ENCODE measurements at regions of chr15 and their contacts with region 1.

Region 1: GRCh38 chr15:82971218-82971984 is 14.6 kb upstream of the RAMAC start:
- DNase-seq: no peak
- ATAC-seq: no peak
- H3K4me3 Mint-ChIP-seq: no peak overlapping the region
- H3K27ac Mint-ChIP-seq: no peak overlapping the region
- H3K4me1 Mint-ChIP-seq: peaks cover 16% of the 10 kb centered on the region
- H3K27me3 Mint-ChIP-seq: peaks cover 3% of the 10 kb centered on the region

Region 2: GRCh38 chr15:82985688-82986441 is 14.5 kb after region 1 on chr15 and contains the start of gene RAMAC:
- POLR2A ChIA-PET with region 1: interaction called, 10 read pairs
- DNase-seq: peak; percentile 83
- ATAC-seq: peak; percentile 92
- H3K4me3 Mint-ChIP-seq: peak within 1 kb of the TSS; percentile 90
- H3K27ac Mint-ChIP-seq: peak within 1 kb of the TSS; percentile 98
- H3K4me1 Mint-ChIP-seq: peaks cover 27% of the 10 kb centered on the region
- H3K27me3 Mint-ChIP-seq: no peaks in the 10 kb centered on the region
- total RNA-seq, gene RAMAC: 24.4 to 25.9 TPM

Measured in activated naive CD8-positive, alpha-beta T cell treated with anti-CD3 and anti-CD28 coated beads, Interleukin-2, amount 10 ng/mL, durations not matched to agents 7 days and 5 days (primary cell).